Activated CD4-positive, alpha-beta memory T cell treated with anti-CD3 and anti-CD28 coated beads for 36 hours (primary cell): ENCODE measurements at regions of chr10 and their contacts with region 1.

Region 1: GRCh38 chr10:80444646-80445319 is 9.3 kb upstream of the TSPAN14 start:
- DNase-seq: peak; percentile 82
- H3K4me3 Mint-ChIP-seq: no peak overlapping the region
- H3K27ac Mint-ChIP-seq: peak overlapping the region; percentile 7
- H3K4me1 Mint-ChIP-seq: peaks cover 56% of the 10 kb centered on the region
- H3K27me3 Mint-ChIP-seq: no peaks in the 10 kb centered on the region

Region 2: DNA sequence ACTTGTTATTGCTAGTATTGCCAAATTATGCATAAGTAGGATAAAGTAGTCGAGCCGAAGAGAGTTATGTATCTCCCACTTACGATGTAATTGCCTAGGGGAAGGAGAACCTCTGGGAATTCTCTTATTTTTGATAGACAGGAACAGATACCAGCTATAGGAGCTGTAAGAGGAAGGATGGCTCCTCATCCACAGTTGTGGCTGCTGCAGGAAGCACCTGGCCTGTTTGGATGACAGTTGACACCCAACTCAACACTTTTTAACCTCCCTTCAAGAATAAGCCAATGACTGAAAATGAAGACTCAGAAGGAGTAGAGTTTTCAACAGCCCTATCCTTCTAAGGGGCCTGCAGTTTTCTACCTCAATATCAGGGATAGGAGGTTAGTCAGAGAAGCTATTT is 94.5 kb before region 1 on chr10:
- CTCF ChIA-PET with region 1: no interaction called
- POLR2A ChIA-PET with region 1: no interaction called
- intact Hi-C with region 1: no loop called
- DNase-seq: no peak
- H3K4me3 Mint-ChIP-seq: no peak overlapping the region
- H3K27ac Mint-ChIP-seq: no peak overlapping the region
- H3K4me1 Mint-ChIP-seq: no peaks in the 10 kb centered on the region
- H3K27me3 Mint-ChIP-seq: peaks cover 28% of the 10 kb centered on the region

Region 3: GRCh38 chr10:80408242-80409101 is 36.3 kb before region 1 on chr10 and contains the start of gene PRXL2A:
- CTCF ChIA-PET with region 1: interaction called, 9 read pairs
- POLR2A ChIA-PET with region 1: interaction called, 4 read pairs
- intact Hi-C with region 1: loop called (anchors 2 kb)
- DNase-seq: peak; percentile 86
- H3K4me3 Mint-ChIP-seq: peak within 1 kb of the TSS; percentile 80
- H3K27ac Mint-ChIP-seq: peak within 1 kb of the TSS; percentile 57
- H3K4me1 Mint-ChIP-seq: peaks cover 16% of the 10 kb centered on the region
- H3K27me3 Mint-ChIP-seq: peaks cover 5% of the 10 kb centered on the region
- total RNA-seq, gene PRXL2A: 9.5 to 10.1 TPM

Region 4: GRCh38 chr10:80487791-80488538 is 43.2 kb after region 1 on chr10:
- CTCF ChIA-PET with region 1: interaction called, 14 read pairs
- POLR2A ChIA-PET with region 1: no interaction called
- intact Hi-C with region 1: no loop called
- DNase-seq: peak; percentile 80
- H3K4me3 Mint-ChIP-seq: peak overlapping the region; percentile 59
- H3K27ac Mint-ChIP-seq: peak overlapping the region; percentile 89
- H3K4me1 Mint-ChIP-seq: peaks cover 99% of the 10 kb centered on the region
- H3K27me3 Mint-ChIP-seq: no peaks in the 10 kb centered on the region

Region 5: DNA sequence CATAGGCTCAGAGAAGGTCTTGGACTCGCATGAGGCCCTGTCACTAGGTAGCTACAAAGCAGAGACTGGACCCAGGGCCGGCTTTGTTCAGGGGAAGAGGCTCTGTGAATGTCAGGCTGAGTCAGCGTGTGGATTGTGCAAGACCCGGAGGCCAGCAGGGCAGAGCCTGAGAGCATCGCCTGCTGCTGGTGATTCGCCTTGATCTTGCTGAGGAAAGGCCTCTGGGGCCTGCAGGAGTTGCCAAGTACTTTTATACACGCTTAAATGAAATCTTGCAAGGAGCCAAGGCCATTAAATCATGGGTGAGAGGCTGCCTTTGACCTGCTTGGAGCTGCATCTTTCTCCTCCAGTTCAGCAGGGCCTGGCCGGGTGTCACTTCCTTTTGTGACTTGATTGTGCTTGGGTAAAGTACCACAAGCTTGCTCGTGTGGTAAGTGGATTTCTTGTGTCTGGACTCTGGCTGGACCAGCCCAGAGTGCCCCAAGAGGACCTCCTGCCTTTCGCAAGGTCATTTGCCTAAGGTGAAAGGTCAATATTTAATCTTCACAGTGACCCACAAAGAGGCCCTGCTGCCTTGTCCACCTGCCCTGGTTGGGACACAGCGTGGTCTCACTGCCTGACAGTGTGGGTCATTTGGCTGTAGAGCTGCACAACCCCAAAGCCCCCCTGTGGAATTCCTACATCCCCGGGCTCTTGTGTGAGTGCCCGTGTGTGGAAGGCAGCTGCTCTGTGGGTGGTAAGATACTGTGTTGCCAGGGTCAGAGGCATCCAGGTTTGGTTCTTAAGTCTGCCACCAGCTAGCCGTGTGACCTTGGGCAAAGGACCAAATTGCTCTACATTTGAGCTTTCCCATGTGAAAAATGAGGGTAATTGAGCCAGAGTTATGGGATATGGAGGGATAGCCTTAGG is 54.3 kb after region 1 on chr10:
- CTCF ChIA-PET with region 1: interaction called, 1,168 read pairs
- POLR2A ChIA-PET with region 1: interaction called, 6 read pairs
- intact Hi-C with region 1: no loop called
- DNase-seq: peak; percentile 88
- H3K4me3 Mint-ChIP-seq: peak overlapping the region; percentile 40
- H3K27ac Mint-ChIP-seq: peak overlapping the region; percentile 93
- H3K4me1 Mint-ChIP-seq: peaks cover 97% of the 10 kb centered on the region
- H3K27me3 Mint-ChIP-seq: no peaks in the 10 kb centered on the region

Region 6: GRCh38 chr10:80530251-80530650 is 85.5 kb after region 1 on chr10:
- CTCF ChIA-PET with region 1: interaction called, 27 read pairs
- POLR2A ChIA-PET with region 1: no interaction called
- intact Hi-C with region 1: loop called (anchors 1 kb)
- DNase-seq: peak; percentile 80
- H3K4me3 Mint-ChIP-seq: no peak overlapping the region
- H3K27ac Mint-ChIP-seq: peak overlapping the region; percentile 74
- H3K4me1 Mint-ChIP-seq: peaks cover 66% of the 10 kb centered on the region
- H3K27me3 Mint-ChIP-seq: no peaks in the 10 kb centered on the region

Region 7: GRCh38 chr10:80662577-80663261 is 217.9 kb after region 1 on chr10:
- CTCF ChIA-PET with region 1: interaction called, 10 read pairs
- POLR2A ChIA-PET with region 1: no interaction called
- intact Hi-C with region 1: loop called (anchors 1 kb)
- DNase-seq: peak; percentile 80
- H3K4me3 Mint-ChIP-seq: peak overlapping the region; percentile 41
- H3K27ac Mint-ChIP-seq: no peak overlapping the region
- H3K4me1 Mint-ChIP-seq: peaks cover 4% of the 10 kb centered on the region
- H3K27me3 Mint-ChIP-seq: peaks cover 15% of the 10 kb centered on the region

Region 8: DNA sequence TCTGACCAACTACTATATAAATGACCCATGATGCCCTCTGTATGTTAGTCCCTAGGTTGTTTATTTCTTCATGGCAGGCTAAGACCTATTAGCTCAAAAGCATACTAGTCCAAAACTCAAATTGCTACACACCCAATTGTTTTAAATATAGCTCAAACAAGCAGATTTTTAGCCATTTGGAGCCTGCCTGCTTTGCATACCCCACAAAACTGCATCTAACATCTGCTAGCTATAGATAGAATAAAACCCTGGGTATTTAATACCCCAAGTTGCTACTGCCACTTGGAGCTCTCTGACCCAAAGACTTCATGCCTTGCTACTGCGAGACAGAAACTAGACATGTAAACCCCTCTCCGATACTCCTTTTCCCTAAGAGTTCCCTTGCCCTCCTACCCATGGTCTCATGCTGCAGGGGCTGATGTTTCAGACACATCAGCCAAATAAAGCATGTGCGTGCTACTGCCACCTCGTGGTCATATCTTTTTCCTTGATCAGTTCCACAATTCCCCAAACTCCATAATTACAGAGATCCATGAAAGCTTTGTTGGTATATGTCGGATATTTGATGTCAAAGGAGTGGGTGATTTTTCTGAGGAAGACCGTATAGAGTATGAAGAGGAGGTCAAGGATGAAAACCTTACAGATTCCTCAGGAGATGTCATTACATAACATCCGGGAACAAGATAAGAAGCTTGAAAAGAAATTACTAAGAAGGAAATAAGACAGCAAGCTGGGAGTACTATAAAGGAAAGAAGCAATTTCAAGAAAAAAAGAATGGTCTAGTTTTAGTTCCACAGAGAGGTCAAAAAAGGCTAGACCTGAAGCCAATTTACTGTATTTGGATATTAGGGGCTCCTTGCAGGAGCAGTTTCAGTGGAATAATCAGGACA is 479.5 kb after region 1 on chr10:
- CTCF ChIA-PET with region 1: interaction called, 3 read pairs
- POLR2A ChIA-PET with region 1: no interaction called
- intact Hi-C with region 1: loop called (anchors 10 kb)
- DNase-seq: peak; percentile 26
- H3K4me3 Mint-ChIP-seq: no peak overlapping the region
- H3K27ac Mint-ChIP-seq: no peak overlapping the region
- H3K4me1 Mint-ChIP-seq: no peaks in the 10 kb centered on the region
- H3K27me3 Mint-ChIP-seq: peaks cover 3% of the 10 kb centered on the region

Region 9: DNA sequence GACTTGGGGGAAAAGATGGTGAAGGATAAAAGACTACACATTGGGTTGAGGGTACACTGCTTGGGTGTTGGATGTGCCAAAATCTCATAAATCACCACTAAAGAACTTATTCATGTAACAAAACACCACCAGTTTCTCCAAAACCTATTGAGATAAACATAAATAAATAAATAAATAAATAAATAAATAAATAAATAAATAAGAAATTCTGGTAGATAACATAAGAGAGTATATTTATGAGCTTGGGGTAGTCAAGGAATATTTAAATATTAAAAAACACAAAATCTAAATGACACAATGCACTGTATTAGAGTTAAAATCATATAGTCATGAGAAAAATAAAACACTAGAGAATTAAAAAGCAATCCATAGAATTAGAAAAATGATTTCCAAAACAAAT is 1096.7 kb after region 1 on chr10:
- CTCF ChIA-PET with region 1: no interaction called
- POLR2A ChIA-PET with region 1: no interaction called
- intact Hi-C with region 1: no loop called
- DNase-seq: no peak
- H3K4me3 Mint-ChIP-seq: no peak overlapping the region
- H3K27ac Mint-ChIP-seq: no peak overlapping the region
- H3K4me1 Mint-ChIP-seq: no peaks in the 10 kb centered on the region
- H3K27me3 Mint-ChIP-seq: no peaks in the 10 kb centered on the region